IMR-90 (cell line): ENCODE measurements at regions of chr6 and their contacts with region 1.

Region 1: GRCh38 chr6:1630771-1631217 is 21.1 kb downstream of the FOXC1 start:
- DNase-seq: peak; percentile 88
- ATAC-seq: peak; percentile 86
- H3K4me3 ChIP-seq: no peak overlapping the region
- H3K27ac ChIP-seq: no peak overlapping the region
- H3K4me1 ChIP-seq: peaks cover 16% of the 10 kb centered on the region
- H3K27me3 ChIP-seq: peaks cover 2% of the 10 kb centered on the region
- CTCF ChIP-seq: no peak
- POLR2A ChIP-seq: no peak
- RAD21 ChIP-seq: no peak

Region 2: GRCh38 chr6:1665214-1665613 is 34.4 kb after region 1 on chr6:
- CTCF ChIA-PET with region 1: no interaction called
- POLR2A ChIA-PET with region 1: no interaction called
- dilution Hi-C with region 1: no loop called
- in situ Hi-C with region 1: no loop called
- intact Hi-C with region 1: loop called (anchors 5 kb)
- DNase-seq: no peak
- ATAC-seq: no peak
- H3K4me3 ChIP-seq: no peak overlapping the region
- H3K27ac ChIP-seq: no peak overlapping the region
- H3K4me1 ChIP-seq: peaks cover 26% of the 10 kb centered on the region
- H3K27me3 ChIP-seq: no peaks in the 10 kb centered on the region
- CTCF ChIP-seq: no peak
- POLR2A ChIP-seq: no peak
- RAD21 ChIP-seq: no peak